Naive thymus-derived CD4-positive, alpha-beta T cell (primary cell): ENCODE measurements at regions of chr7 and their contacts with region 1.

Region 1: GRCh38 chr7:132437730-132438129 is 138.5 kb downstream of the PLXNA4 start:
- DNase-seq: peak in 7 of 9 donors; percentile 25 to 60 (median 51)
- ATAC-seq: peak; percentile 58
- H3K4me3 ChIP-seq: peak overlapping the region; percentile 19
- H3K4me3 Mint-ChIP-seq: peak overlapping the region; percentile 12 to 83 (median 68)
- H3K27ac ChIP-seq: peak overlapping the region; percentile 14
- H3K27ac Mint-ChIP-seq: peak overlapping the region; percentile 17 to 85 (median 71)
- H3K4me1 ChIP-seq: peaks cover 36 to 78% of the 10 kb centered on the region in 2 donors
- H3K4me1 Mint-ChIP-seq: peaks cover 51 to 94% (median 81%) of the 10 kb centered on the region in 7 donors
- H3K27me3 ChIP-seq: no peaks in the 10 kb centered on the region
- H3K27me3 Mint-ChIP-seq: peaks cover 0 to 3% (median 0%) of the 10 kb centered on the region in 5 donors

Region 2: DNA sequence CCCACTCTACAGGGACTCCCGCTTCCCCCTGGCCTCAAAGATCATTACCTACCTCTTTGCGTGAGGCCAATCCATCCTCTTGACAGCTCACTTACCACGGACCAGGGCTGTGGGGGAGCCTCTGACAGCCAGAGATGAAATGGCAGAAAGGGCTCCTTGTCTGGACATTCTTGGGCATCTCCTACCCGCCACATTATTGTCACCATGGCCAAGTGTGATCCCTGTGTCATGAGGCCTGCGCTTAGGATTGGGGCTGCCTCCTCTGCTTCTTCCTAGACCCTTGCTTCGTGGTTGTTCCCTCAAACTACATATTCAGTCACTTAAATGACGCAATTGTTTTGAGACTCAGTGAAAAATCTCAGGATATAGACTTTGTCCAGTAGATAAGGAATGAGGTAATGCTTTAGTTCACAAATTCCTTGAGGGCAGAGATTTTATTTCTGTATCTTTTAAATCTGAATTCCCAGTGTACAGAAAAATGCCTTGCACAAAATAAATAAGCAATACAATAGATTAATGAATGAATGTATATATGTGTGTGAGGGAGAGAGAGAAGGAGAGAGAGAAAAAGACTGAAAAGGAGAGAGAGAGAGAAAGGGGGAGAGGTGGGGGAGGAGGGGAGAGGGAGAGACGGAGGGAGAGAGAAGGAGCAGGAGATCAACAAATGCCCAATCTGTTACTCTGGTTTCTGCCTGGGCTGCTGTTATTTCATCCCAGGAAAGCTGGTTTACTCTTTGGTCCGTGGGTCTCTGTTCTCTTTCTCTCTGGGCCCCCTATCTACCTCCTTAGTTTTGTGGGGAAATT is 20.4 kb before region 1 on chr7:
- CTCF ChIA-PET with region 1: no interaction called
- POLR2A ChIA-PET with region 1: no interaction called
- intact Hi-C with region 1: loop called in 1 of 2 experiments (anchors 2 kb)
- DNase-seq: no peak
- ATAC-seq: no peak
- H3K4me3 ChIP-seq: no peak overlapping the region
- H3K4me3 Mint-ChIP-seq: no peak overlapping the region
- H3K27ac ChIP-seq: no peak overlapping the region
- H3K27ac Mint-ChIP-seq: no peak overlapping the region
- H3K4me1 ChIP-seq: no peaks in the 10 kb centered on the region
- H3K4me1 Mint-ChIP-seq: peaks cover 4 to 32% (median 8%) of the 10 kb centered on the region in 7 donors
- H3K27me3 ChIP-seq: no peaks in the 10 kb centered on the region
- H3K27me3 Mint-ChIP-seq: peaks cover 0 to 58% (median 0%) of the 10 kb centered on the region in 5 donors

Region 3: DNA sequence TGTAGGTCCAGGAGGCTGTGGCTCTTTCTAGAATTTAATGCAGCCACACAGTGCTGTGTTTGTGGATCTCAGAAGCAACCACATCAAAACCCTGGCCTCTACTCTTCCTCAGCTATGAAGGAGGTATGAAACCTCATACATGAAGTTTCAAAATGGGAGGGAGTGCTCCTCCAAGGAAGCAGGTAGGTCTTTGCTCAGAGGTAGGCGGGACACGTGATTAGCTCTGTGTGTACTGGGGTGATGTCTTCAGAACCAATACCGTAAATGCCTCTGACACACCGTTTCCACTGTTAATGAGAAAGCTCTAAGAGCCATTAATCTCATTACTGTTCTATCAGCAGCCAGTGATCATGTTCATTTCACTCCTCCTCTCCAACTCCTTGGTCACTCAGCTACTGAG is 12.5 kb after region 1 on chr7:
- CTCF ChIA-PET with region 1: no interaction called
- POLR2A ChIA-PET with region 1: interaction called, 7 read pairs
- intact Hi-C with region 1: loop called in 1 of 2 experiments (anchors 1 kb)
- DNase-seq: no peak
- ATAC-seq: no peak
- H3K4me3 ChIP-seq: no peak overlapping the region
- H3K4me3 Mint-ChIP-seq: peak overlapping the region in 1 of 10 donors; percentile 64
- H3K27ac ChIP-seq: no peak overlapping the region
- H3K27ac Mint-ChIP-seq: peak overlapping the region in 2 of 9 donors; percentile 46 to 69
- H3K4me1 ChIP-seq: peaks cover 16 to 43% of the 10 kb centered on the region in 2 donors
- H3K4me1 Mint-ChIP-seq: peaks cover 22 to 93% (median 48%) of the 10 kb centered on the region in 7 donors
- H3K27me3 ChIP-seq: no peaks in the 10 kb centered on the region
- H3K27me3 Mint-ChIP-seq: no peaks in the 10 kb centered on the region

Region 4: GRCh38 chr7:132464746-132465145 is 27.0 kb after region 1 on chr7:
- CTCF ChIA-PET with region 1: interaction called, 3 read pairs
- POLR2A ChIA-PET with region 1: interaction called, 4 read pairs
- intact Hi-C with region 1: loop called in 1 of 2 experiments (anchors 1 kb)
- DNase-seq: no peak
- ATAC-seq: no peak
- H3K4me3 ChIP-seq: no peak overlapping the region
- H3K4me3 Mint-ChIP-seq: no peak overlapping the region
- H3K27ac ChIP-seq: no peak overlapping the region
- H3K27ac Mint-ChIP-seq: peak overlapping the region in 1 of 9 donors; percentile 20
- H3K4me1 ChIP-seq: peaks cover 10 to 16% of the 10 kb centered on the region in 2 donors
- H3K4me1 Mint-ChIP-seq: peaks cover 20 to 65% (median 29%) of the 10 kb centered on the region in 7 donors
- H3K27me3 ChIP-seq: no peaks in the 10 kb centered on the region
- H3K27me3 Mint-ChIP-seq: peaks cover 0 to 21% (median 0%) of the 10 kb centered on the region in 5 donors

Region 5: GRCh38 chr7:132472463-132473120 is 34.9 kb after region 1 on chr7:
- CTCF ChIA-PET with region 1: interaction called, 3 read pairs
- POLR2A ChIA-PET with region 1: no interaction called
- intact Hi-C with region 1: loop called in 1 of 2 experiments (anchors 5 kb)
- DNase-seq: no peak
- ATAC-seq: no peak
- H3K4me3 ChIP-seq: no peak overlapping the region
- H3K4me3 Mint-ChIP-seq: peak overlapping the region in 2 of 10 donors; percentile 17 to 32
- H3K27ac ChIP-seq: no peak overlapping the region
- H3K27ac Mint-ChIP-seq: peak overlapping the region in 2 of 9 donors; percentile 36 to 53
- H3K4me1 ChIP-seq: peaks cover 0 to 11% of the 10 kb centered on the region in 2 donors
- H3K4me1 Mint-ChIP-seq: peaks cover 11 to 73% (median 27%) of the 10 kb centered on the region in 7 donors
- H3K27me3 ChIP-seq: no peaks in the 10 kb centered on the region
- H3K27me3 Mint-ChIP-seq: peaks cover 0 to 65% (median 0%) of the 10 kb centered on the region in 5 donors

Region 6: DNA sequence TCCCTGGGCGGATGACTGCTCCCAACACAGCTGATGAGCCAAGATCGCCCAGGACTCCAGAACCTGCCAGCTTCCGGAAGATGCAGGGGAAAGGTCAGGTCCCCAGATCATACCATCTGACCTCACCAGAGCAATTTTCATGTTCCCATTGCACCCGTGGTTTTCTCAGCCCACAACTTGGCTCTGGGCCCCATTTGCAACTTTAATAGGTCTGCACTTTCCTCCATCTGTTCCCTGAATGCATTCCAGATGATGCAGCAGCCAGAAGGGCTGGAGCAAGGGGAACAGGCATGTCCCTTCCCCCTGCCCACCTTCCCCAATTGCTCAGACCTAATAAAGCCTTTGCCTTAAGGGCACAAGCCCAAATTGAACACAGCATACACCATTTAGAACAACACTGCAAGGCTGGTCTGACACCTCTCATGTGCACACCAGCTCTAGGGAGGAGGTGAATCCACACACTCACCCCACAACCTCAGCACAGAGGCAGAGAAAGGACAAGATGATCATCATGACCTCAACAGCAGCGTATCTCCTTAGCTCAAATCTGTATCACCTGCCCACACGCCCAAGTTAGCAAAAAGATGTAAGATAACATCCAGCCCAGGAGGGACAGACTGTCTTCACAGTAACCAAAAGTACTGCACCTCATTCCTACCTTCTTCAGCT is 51.0 kb after region 1 on chr7:
- CTCF ChIA-PET with region 1: interaction called, 3 read pairs
- POLR2A ChIA-PET with region 1: interaction called, 3 read pairs
- intact Hi-C with region 1: loop called in 1 of 2 experiments (anchors 1 kb)
- DNase-seq: no peak
- ATAC-seq: no peak
- H3K4me3 ChIP-seq: no peak overlapping the region
- H3K4me3 Mint-ChIP-seq: no peak overlapping the region
- H3K27ac ChIP-seq: no peak overlapping the region
- H3K27ac Mint-ChIP-seq: peak overlapping the region in 1 of 9 donors; percentile 3
- H3K4me1 ChIP-seq: peaks cover 22 to 31% of the 10 kb centered on the region in 2 donors
- H3K4me1 Mint-ChIP-seq: peaks cover 29 to 56% (median 45%) of the 10 kb centered on the region in 7 donors
- H3K27me3 ChIP-seq: no peaks in the 10 kb centered on the region
- H3K27me3 Mint-ChIP-seq: peaks cover 0 to 42% (median 0%) of the 10 kb centered on the region in 5 donors

Region 7: GRCh38 chr7:132520591-132521475 is 83.1 kb after region 1 on chr7:
- CTCF ChIA-PET with region 1: no interaction called
- POLR2A ChIA-PET with region 1: no interaction called
- intact Hi-C with region 1: no loop called
- DNase-seq: no peak
- ATAC-seq: no peak
- H3K4me3 ChIP-seq: no peak overlapping the region
- H3K4me3 Mint-ChIP-seq: no peak overlapping the region
- H3K27ac ChIP-seq: no peak overlapping the region
- H3K27ac Mint-ChIP-seq: no peak overlapping the region
- H3K4me1 ChIP-seq: no peaks in the 10 kb centered on the region
- H3K4me1 Mint-ChIP-seq: peaks cover 0 to 35% (median 0%) of the 10 kb centered on the region in 7 donors
- H3K27me3 ChIP-seq: no peaks in the 10 kb centered on the region
- H3K27me3 Mint-ChIP-seq: peaks cover 0 to 1% (median 0%) of the 10 kb centered on the region in 5 donors

Region 8: DNA sequence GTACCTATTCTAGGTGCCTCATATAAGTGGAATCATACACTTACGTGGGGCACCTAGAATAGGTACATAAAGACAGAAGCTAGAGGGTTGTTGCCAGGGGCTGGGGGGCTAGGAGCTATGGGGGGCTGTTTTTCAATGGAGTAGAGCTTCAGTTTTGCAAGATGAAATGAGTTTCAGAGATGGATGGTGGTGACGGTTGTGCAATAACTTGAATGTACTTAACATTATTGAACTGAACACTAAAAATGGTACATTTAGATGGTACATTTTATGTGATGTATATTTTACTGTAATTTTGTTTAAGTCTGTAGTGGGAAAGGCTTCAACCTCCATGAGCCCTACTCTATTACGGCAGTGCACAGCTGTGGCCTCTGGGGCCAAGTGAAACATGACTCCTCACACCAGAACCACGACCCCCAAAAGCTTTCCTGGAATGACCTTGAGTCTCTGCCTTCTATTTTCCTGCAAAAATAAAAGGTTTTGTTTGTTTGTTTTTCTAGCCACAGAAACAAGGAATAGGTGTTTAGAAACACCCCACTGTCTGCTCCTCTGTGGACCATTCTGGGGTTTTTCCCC is 285.9 kb after region 1 on chr7:
- CTCF ChIA-PET with region 1: no interaction called
- POLR2A ChIA-PET with region 1: no interaction called
- intact Hi-C with region 1: no loop called
- DNase-seq: no peak
- ATAC-seq: no peak
- H3K4me3 ChIP-seq: no peak overlapping the region
- H3K4me3 Mint-ChIP-seq: no peak overlapping the region
- H3K27ac ChIP-seq: no peak overlapping the region
- H3K27ac Mint-ChIP-seq: peak overlapping the region in 1 of 9 donors; percentile 47
- H3K4me1 ChIP-seq: no peaks in the 10 kb centered on the region
- H3K4me1 Mint-ChIP-seq: no peaks in the 10 kb centered on the region
- H3K27me3 ChIP-seq: no peaks in the 10 kb centered on the region
- H3K27me3 Mint-ChIP-seq: peaks cover 0 to 11% (median 0%) of the 10 kb centered on the region in 5 donors